HEK293 (cell line): ENCODE measurements at regions of chr6 and their contacts with region 1.

Region 1: GRCh38 chr6:16183187-16183664 is 54.3 kb downstream of the MYLIP start:
- H3K4me3 ChIP-seq: no peak overlapping the region
- H3K27ac ChIP-seq: no peak overlapping the region
- H3K4me1 ChIP-seq: no peaks in the 10 kb centered on the region
- CTCF ChIP-seq: peak; percentile 32; the same call in 1 of the 2 replicates

Region 2: GRCh38 chr6:15691250-15691869 is 491.9 kb before region 1 on chr6:
- CTCF ChIA-PET with region 1: interaction called, 44 read pairs
- POLR2A ChIA-PET with region 1: no interaction called
- H3K4me3 ChIP-seq: peak overlapping the region; percentile 3
- H3K27ac ChIP-seq: no peak overlapping the region
- H3K4me1 ChIP-seq: no peaks in the 10 kb centered on the region
- CTCF ChIP-seq: peak; percentile 99

Region 3: GRCh38 chr6:15744818-15745402 is 438.3 kb before region 1 on chr6:
- CTCF ChIA-PET with region 1: no interaction called
- POLR2A ChIA-PET with region 1: no interaction called
- H3K4me3 ChIP-seq: no peak overlapping the region
- H3K27ac ChIP-seq: no peak overlapping the region
- H3K4me1 ChIP-seq: no peaks in the 10 kb centered on the region
- CTCF ChIP-seq: no peak

Region 4: DNA sequence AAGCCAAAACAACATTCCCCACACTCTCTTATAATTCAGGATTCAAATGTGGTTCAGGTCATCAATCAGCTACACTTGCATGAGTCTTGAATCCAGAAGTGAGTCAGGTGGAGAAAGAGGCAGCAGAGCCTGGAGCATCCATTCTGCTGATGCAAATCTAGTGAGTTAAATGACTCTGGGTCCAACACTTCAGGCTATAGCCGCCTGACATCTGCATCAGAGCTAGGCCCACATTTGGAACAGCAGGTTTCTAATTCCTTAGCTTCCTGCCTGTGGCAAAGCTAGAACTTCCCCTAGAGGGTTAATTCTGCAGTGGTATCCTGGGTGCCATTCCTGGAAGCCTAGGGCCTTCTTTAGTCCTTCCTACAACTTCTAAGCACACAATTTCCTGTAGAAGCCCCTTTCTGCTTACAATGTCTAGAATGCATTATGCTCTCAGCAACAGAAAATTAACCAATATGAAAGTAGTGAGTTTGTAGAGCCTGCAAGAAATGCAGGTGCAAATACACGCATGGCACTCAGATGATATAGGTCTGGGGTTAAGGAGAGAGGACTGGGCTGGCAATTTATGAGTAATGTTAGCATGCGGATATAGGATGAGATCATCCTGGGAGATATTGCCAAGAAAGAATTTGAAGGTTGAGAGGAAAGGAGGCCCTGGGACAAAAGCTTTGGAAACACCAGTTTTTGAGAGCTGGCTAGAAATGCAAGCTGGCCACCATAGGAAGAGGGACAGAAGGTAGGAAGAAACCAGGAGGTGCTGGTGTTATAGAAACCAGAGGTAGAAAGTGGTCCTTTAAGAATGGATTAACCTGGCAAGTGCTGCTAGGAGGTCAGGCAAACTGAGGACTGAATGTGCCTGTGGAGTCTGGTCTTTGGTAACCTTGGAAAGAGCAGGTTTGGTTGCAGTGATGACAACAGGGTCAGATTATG is 237.7 kb before region 1 on chr6:
- CTCF ChIA-PET with region 1: no interaction called
- POLR2A ChIA-PET with region 1: no interaction called
- H3K4me3 ChIP-seq: no peak overlapping the region
- H3K27ac ChIP-seq: peak overlapping the region; percentile 11; the same call in 1 of the 2 replicates
- H3K4me1 ChIP-seq: peaks cover 23% of the 10 kb centered on the region
- CTCF ChIP-seq: no peak

Region 5: DNA sequence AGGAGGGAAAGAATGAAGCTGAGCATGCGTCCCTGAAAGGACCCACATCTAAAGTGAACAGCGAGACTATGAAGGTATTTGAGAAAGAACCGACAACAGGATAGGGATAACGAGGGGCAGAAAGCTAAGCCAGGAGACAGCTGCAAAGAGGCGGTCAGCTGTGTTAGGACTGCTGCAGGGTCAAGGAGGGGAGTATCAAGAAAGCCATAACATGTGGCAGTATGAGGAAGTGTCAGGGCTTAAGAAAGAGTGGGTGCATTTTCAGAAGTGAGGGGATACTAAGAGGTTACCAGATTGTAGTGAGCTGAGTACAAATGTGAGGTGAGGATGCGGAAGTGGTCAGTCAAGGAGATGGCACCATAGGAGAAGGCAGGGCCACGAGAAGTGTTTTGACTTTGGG is 33.1 kb before region 1 on chr6:
- CTCF ChIA-PET with region 1: interaction called, 11 read pairs
- POLR2A ChIA-PET with region 1: interaction called, 3 read pairs
- H3K4me3 ChIP-seq: no peak overlapping the region
- H3K27ac ChIP-seq: no peak overlapping the region
- H3K4me1 ChIP-seq: peaks cover 12% of the 10 kb centered on the region
- CTCF ChIP-seq: no peak

Region 6: DNA sequence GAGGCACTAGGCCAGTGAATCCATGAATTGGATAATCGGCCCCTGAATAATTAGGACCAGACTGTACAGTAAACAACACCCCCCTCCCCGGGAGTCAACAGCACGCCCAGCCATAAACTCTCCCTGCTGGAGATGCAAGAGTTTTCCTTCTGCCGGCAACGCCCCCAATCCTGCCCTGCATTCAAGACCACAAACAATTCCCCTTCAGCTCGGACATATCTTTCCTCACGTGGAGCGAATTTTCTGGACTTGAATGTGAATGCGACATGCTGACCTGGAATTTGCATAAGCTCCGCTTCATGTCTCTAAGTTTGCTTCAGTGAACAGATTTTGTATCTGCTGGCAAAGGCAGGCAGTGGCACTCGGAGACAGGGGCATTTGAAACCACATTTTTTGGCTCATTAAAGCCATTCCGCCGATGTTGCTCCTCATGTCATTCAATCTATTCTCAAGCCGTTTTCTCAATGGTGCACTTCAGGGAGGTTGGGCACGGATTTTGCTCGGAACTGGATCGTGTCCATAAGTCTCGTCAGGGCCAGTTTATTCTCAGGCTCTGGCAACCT is 17.2 kb after region 1 on chr6:
- CTCF ChIA-PET with region 1: interaction called, 26 read pairs
- POLR2A ChIA-PET with region 1: no interaction called
- H3K4me3 ChIP-seq: no peak overlapping the region
- H3K27ac ChIP-seq: no peak overlapping the region; the same call in 1 of the 2 replicates
- H3K4me1 ChIP-seq: peaks cover 17% of the 10 kb centered on the region
- CTCF ChIP-seq: no peak